ENCODE measurements at regions of chr6 and their contacts with region 1.

Region 1: GRCh38 chr6:90478789-90479602 is 107.9 kb downstream of the MAP3K7 start:
- DNase-seq: peak; percentile 70 to 89
- ATAC-seq: peak; percentile 98 to 100 (median 99)
- H3K4me3 ChIP-seq: no peak overlapping the region
- H3K27ac ChIP-seq: peak overlapping the region in 2 of 10 donors; percentile 24
- H3K4me1 ChIP-seq: peaks cover 0 to 9% (median 4%) of the 10 kb centered on the region in 9 donors
- H3K27me3 ChIP-seq: no peaks in the 10 kb centered on the region
- CTCF ChIP-seq: peak; percentile 89 to 95 (median 92)

Region 2: GRCh38 chr6:89940225-89941027 is 538.6 kb before region 1 on chr6:
- intact Hi-C with region 1: loop called (anchors 1 to 5 kb)
- DNase-seq: peak in 1 of 2 donors; percentile 67
- ATAC-seq: peak; percentile 82 to 95 (median 92)
- H3K4me3 ChIP-seq: no peak overlapping the region
- H3K27ac ChIP-seq: no peak overlapping the region
- H3K4me1 ChIP-seq: peaks cover 0 to 12% (median 0%) of the 10 kb centered on the region in 9 donors
- H3K27me3 ChIP-seq: no peaks in the 10 kb centered on the region
- CTCF ChIP-seq: peak; percentile 44 to 85 (median 72)

Region 3: DNA sequence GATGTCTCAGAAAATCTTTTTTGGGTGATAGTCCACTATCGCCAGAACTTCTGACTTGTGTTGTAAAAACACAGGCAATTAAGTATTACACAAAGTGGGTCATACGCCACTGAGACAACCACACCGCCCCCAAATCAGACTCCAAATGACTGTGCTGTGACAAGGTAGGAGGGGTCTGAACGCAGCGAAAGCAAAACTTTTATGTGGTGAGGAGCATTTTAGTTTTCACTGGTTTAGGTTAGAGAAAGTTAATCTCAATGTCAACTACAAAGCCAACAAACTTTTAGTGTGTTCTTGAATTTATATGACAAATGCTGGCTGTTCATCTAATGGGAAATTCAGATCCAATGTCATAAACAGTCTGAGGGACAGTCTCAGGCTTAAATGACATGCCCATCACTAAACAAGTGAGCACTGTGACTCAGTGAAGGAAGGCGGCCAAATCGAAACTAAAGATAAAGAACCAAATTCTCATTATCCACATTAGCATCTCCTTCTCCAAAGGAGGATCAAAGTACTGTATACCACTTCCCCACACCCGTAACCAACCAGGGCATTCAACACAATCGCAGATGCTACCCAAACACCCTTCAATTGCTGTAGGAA is 398.0 kb before region 1 on chr6:
- intact Hi-C with region 1: loop called in 1 of 10 experiments (anchors 10 kb)
- DNase-seq: no peak
- ATAC-seq: no peak
- H3K4me3 ChIP-seq: peak overlapping the region in 1 of 10 donors; percentile 28
- H3K27ac ChIP-seq: peak overlapping the region in 1 of 10 donors; percentile 52
- H3K4me1 ChIP-seq: peaks cover 0 to 29% (median 0%) of the 10 kb centered on the region in 9 donors
- H3K27me3 ChIP-seq: no peaks in the 10 kb centered on the region
- CTCF ChIP-seq: no peak

Region 4: DNA sequence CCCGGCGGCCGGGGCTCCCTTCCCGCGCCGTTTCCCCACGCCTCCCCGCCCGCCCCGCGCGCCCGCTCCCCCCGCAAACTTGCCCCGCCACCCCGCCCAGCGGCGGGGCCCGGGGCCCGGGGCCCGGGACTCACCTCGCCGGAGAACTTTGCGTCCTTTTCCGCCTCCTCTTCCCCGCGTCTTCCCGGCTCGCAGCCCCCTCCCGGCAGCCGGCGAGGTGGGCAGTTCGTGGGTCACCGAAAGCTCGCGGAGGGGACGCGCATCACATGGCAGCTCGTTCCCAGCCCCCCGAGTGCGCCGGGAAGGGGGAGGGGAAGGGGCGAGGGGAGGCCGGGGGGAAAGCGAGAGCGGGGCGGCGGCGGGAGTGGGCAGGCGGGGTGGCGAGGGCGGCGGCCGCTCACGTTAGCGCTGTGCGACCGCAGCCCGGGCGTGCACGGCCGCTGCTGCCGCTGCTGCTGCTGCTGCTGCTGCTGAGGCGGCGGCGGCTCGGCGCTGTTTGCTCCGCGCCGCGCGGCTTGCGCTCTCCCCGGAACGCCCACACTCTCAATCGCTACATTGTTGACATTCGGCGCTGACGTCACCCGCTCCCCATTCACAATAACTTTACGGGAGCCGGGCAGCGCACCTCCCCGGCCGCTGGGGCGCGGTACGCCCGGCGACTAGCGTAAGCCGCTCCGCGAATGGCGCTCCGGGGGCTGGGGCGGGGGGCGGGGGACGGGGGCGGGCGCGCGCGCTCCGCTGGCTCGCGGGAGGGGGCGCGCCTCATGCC is 182.5 kb before region 1 on chr6 and contains the start of gene BACH2:
- intact Hi-C with region 1: loop called in 7 of 10 experiments (anchors 5 to 10 kb)
- DNase-seq: peak; percentile 87 to 91
- ATAC-seq: peak; percentile 64 to 87 (median 75)
- H3K4me3 ChIP-seq: peak within 1 kb of the TSS; percentile 48 to 93 (median 80)
- H3K27ac ChIP-seq: peak within 1 kb of the TSS; percentile 74 to 92 (median 82)
- H3K4me1 ChIP-seq: peaks cover 0 to 29% (median 14%) of the 10 kb centered on the region in 9 donors
- H3K27me3 ChIP-seq: peaks cover 0 to 53% (median 0%) of the 10 kb centered on the region in 7 donors
- CTCF ChIP-seq: peak in 4 of 9 donors; percentile 19 to 38 (median 27)
- total RNA-seq, gene BACH2: 1.5 to 4.7 (median 2.8) TPM

Region 5: GRCh38 chr6:90393232-90393884 is 85.6 kb before region 1 on chr6:
- intact Hi-C with region 1: loop called in 5 of 10 experiments (anchors 5 kb)
- DNase-seq: peak in 1 of 2 donors; percentile 54
- ATAC-seq: peak in 6 of 8 donors; percentile 49 to 76 (median 63)
- H3K4me3 ChIP-seq: no peak overlapping the region
- H3K27ac ChIP-seq: no peak overlapping the region
- H3K4me1 ChIP-seq: peaks cover 0 to 4% (median 0%) of the 10 kb centered on the region in 9 donors
- H3K27me3 ChIP-seq: peaks cover 0 to 4% (median 0%) of the 10 kb centered on the region in 7 donors
- CTCF ChIP-seq: peak; percentile 68 to 88 (median 78)

Region 6: GRCh38 chr6:90523779-90524310 is 44.8 kb after region 1 on chr6:
- intact Hi-C with region 1: no loop called
- DNase-seq: no peak
- ATAC-seq: no peak
- H3K4me3 ChIP-seq: no peak overlapping the region
- H3K27ac ChIP-seq: no peak overlapping the region
- H3K4me1 ChIP-seq: peaks cover 0 to 6% (median 0%) of the 10 kb centered on the region in 9 donors
- H3K27me3 ChIP-seq: no peaks in the 10 kb centered on the region
- CTCF ChIP-seq: no peak

Region 7: GRCh38 chr6:90621581-90621980 is 142.6 kb after region 1 on chr6:
- intact Hi-C with region 1: no loop called
- DNase-seq: no peak
- ATAC-seq: no peak
- H3K4me3 ChIP-seq: no peak overlapping the region
- H3K27ac ChIP-seq: no peak overlapping the region
- H3K4me1 ChIP-seq: no peaks in the 10 kb centered on the region
- H3K27me3 ChIP-seq: peaks cover 0 to 49% (median 30%) of the 10 kb centered on the region in 7 donors
- CTCF ChIP-seq: no peak

Region 8: GRCh38 chr6:91106083-91106482 is 627.1 kb after region 1 on chr6:
- intact Hi-C with region 1: no loop called
- DNase-seq: no peak
- ATAC-seq: no peak
- H3K4me3 ChIP-seq: no peak overlapping the region
- H3K27ac ChIP-seq: no peak overlapping the region
- H3K4me1 ChIP-seq: no peaks in the 10 kb centered on the region
- H3K27me3 ChIP-seq: peaks cover 0 to 6% (median 0%) of the 10 kb centered on the region in 7 donors
- CTCF ChIP-seq: no peak

Measured in heart right ventricle (tissue), 16 donors.